Mucosa of descending colon (tissue), 3 donors: ENCODE measurements at regions of chr6 and their contacts with region 1.

Region 1: GRCh38 chr6:78995946-78996345 is 82.1 kb downstream of the PHIP start:
- DNase-seq: no peak
- ATAC-seq: no peak
- H3K4me3 ChIP-seq: no peak overlapping the region
- H3K4me1 ChIP-seq: no peaks in the 10 kb centered on the region
- CTCF ChIP-seq: no peak

Region 2: GRCh38 chr6:78947962-78948361 is 48.0 kb before region 1 on chr6:
- intact Hi-C with region 1: loop called in 1 of 2 experiments (anchors 5 kb)
- DNase-seq: no peak
- ATAC-seq: no peak
- H3K4me3 ChIP-seq: no peak overlapping the region
- H3K4me1 ChIP-seq: no peaks in the 10 kb centered on the region
- CTCF ChIP-seq: no peak